ENCODE measurements at regions of chr14 and their contacts with region 1.

Region 1: GRCh38 chr14:39266871-39267591 is 33.3 kb downstream of the MIA2 start:
- DNase-seq: peak; percentile 84 to 92 (median 92)
- ATAC-seq: peak; percentile 97 to 98
- H3K4me3 ChIP-seq: peak overlapping the region; percentile 86
- H3K27ac ChIP-seq: peak overlapping the region; percentile 90
- H3K4me1 ChIP-seq: peaks cover 2% of the 10 kb centered on the region
- H3K27me3 ChIP-seq: no peaks in the 10 kb centered on the region

Region 2: DNA sequence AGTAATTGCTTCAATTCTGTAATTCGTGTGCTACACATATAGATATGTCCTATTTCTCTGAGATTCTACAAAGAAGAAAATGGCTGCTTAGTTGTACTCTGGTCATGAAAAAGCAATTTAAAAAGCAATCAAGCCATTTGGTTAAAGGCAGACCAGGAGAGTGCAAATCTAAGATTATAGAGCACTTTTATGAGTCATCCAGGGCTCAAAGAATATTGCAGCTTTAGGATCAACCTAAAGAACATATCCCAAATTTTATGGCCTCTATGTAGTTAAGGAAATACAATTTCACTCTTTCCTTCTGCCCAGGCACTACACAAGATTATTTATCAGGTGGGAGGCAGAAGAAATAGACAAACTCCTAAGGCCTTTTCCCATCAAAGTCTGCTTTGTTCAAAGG is 496.8 kb before region 1 on chr14:
- intact Hi-C with region 1: no loop called
- DNase-seq: no peak
- ATAC-seq: no peak
- H3K4me3 ChIP-seq: no peak overlapping the region
- H3K27ac ChIP-seq: no peak overlapping the region
- H3K4me1 ChIP-seq: no peaks in the 10 kb centered on the region
- H3K27me3 ChIP-seq: no peaks in the 10 kb centered on the region

Region 3: DNA sequence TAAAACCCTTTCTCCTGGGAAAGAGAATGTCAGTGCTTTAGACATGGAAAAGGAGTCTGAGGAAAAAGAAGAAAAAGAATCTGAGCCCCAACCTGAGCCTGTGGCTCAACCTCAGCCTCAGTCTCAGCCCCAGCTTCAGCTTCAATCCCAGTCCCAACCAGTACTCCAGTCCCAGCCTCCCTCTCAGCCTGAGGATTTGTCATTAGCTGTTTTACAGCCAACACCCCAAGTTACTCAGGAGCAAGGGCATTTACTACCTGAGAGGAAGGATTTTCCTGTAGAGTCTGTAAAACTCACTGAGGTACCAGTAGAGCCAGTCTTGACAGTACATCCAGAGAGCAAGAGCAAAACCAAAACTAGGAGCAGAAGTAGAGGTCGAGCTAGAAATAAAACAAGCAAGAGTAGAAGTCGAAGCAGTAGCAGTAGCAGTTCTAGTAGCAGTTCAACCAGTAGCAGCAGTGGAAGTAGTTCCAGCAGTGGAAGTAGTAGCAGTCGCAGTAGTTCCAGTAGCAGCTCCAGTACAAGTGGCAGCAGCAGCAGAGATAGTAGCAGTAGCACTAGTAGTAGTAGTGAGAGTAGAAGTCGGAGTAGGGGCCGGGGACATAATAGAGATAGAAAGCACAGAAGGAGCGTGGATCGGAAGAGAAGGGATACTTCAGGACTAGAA is 85.9 kb before region 1 on chr14:
- intact Hi-C with region 1: loop called in 3 of 4 experiments (anchors 10 kb)
- DNase-seq: no peak
- ATAC-seq: no peak
- H3K4me3 ChIP-seq: no peak overlapping the region
- H3K27ac ChIP-seq: no peak overlapping the region
- H3K4me1 ChIP-seq: peaks cover 2% of the 10 kb centered on the region
- H3K27me3 ChIP-seq: no peaks in the 10 kb centered on the region

Region 4: DNA sequence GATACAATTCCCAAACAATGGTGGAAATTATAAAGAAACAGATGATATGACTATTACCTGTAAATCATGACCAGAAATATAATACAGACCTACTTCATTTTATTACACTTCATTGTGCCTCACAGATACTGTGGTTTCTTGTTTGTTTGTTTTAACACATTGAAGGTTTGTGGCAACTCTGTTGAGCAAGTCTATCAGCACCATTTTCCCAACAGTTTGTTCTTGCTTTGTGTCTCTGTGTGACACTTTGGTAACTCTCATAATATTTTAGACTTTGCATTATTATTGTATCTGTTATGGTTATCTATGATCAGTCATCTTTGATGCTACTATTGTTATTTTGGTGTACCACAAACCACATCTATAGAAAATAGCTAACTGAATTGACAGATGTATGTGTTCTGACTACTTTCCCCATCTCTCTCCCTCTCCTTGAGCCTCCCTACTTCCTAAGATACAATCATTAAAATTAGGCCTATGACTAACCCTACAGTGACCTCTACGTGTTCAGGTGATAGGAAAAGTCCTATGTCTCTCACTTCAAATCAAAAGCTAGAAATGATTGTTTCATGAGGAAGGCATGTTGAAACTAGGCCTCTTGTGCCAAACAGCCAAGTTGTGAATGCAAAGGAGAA is 116.1 kb after region 1 on chr14:
- intact Hi-C with region 1: no loop called
- DNase-seq: no peak
- ATAC-seq: no peak
- H3K4me3 ChIP-seq: no peak overlapping the region
- H3K27ac ChIP-seq: no peak overlapping the region
- H3K4me1 ChIP-seq: no peaks in the 10 kb centered on the region
- H3K27me3 ChIP-seq: no peaks in the 10 kb centered on the region